BJ (cell line): ENCODE measurements at regions of chr20 and their contacts with region 1.

Region 1: GRCh38 chr20:45011108-45011526 is 44.8 kb downstream of the STK4 start:
- DNase-seq: no peak
- H3K4me3 ChIP-seq: no peak overlapping the region
- H3K27me3 ChIP-seq: no peaks in the 10 kb centered on the region
- CTCF ChIP-seq: peak; percentile 71

Region 2: DNA sequence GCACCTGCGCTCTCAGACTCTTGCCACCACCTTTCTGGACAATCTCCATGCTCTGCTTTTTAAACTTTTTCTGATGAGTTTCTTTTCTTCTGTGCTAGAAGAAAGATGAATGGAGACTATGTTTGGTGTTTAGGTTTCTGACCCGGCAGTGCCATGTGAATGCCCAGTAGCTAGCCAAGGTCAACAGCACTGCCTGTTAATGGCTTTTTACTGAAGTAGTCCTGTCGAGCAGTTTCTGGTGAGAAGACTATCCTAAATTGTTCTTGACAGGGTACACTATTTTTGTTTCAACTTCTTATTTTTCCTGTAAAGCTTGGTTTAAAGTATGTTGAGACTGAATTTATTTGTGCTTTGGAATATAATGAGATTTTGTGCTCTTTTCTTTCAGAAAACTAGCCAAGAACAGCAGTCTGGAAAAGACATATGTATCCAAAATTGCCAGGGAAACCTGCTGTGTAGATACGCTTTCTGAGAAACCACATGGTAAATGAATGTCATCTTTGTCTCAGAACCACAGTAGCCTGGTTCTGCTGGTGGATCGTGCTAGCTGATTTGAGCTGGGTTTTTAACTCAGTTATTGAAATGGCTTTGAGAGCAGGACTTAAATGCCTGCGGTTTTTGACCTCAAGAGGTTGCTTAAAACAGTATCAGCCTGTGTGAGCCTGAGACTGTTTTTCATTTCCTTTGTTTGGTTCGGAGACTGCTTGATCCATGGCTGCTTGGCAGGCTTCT is 41.7 kb after region 1 on chr20:
- CTCF ChIA-PET with region 1: interaction called, 14 read pairs
- POLR2A ChIA-PET with region 1: interaction called, 5 read pairs
- DNase-seq: peak; percentile 73
- H3K4me3 ChIP-seq: no peak overlapping the region
- H3K27me3 ChIP-seq: no peaks in the 10 kb centered on the region
- CTCF ChIP-seq: no peak